Common myeloid progenitor, CD34-positive (primary cell): ENCODE measurements at regions of chr2 and their contacts with region 1.

Region 1: GRCh38 chr2:25606892-25607291 is 66.5 kb downstream of the DTNB start:
- DNase-seq: peak; percentile 42 to 72 (median 69)
- H3K4me3 ChIP-seq: no peak overlapping the region
- H3K27ac ChIP-seq: no peak overlapping the region
- H3K4me1 ChIP-seq: peaks cover 0 to 4% (median under 1%) of the 10 kb centered on the region in 4 experiments
- H3K27me3 ChIP-seq: no peaks in the 10 kb centered on the region

Region 2: GRCh38 chr2:24863641-24864040 is 743.3 kb before region 1 on chr2:
- CTCF ChIA-PET with region 1: no interaction called
- POLR2A ChIA-PET with region 1: no interaction called
- DNase-seq: no peak
- H3K4me3 ChIP-seq: no peak overlapping the region
- H3K27ac ChIP-seq: no peak overlapping the region
- H3K4me1 ChIP-seq: peaks cover 0 to 12% (median 2%) of the 10 kb centered on the region in 4 experiments
- H3K27me3 ChIP-seq: no peaks in the 10 kb centered on the region

Region 3: DNA sequence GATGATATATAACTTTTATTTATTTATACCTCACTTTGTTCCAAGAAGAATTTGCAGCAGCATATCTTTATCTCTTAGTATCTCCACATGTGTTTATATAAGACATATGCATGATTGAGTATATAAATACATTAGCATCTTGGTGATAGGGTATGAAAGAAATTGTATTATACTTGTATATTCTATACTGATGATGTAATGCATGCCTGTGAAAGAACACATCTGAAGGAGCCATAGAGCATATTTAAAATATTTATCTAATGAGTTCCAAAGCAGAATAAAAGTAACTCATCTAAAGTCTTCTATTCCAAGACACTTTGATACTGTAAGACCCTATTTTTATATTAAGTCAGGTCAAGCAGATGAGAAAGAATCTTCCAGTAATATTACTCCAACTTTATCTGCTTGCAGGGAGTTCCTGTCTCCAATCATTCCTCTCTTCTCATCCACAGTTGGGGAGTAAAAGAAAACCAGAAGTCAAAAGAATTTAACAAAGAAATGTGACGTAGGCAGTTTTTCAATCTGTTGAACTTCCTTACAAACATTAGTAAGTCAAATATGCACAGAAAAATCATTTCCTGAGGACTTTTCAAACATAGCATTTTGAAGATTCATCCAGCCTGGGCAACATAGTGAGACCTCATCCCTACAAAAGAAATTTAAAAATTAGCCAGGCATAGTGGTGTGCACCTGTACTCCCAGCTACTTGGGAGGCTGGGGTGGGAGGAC is 10.2 kb before region 1 on chr2:
- CTCF ChIA-PET with region 1: interaction called, 13 read pairs
- POLR2A ChIA-PET with region 1: no interaction called
- DNase-seq: peak in 1 of 3 donors; percentile 16
- H3K4me3 ChIP-seq: no peak overlapping the region
- H3K27ac ChIP-seq: no peak overlapping the region
- H3K4me1 ChIP-seq: peaks cover 0 to 16% (median 0%) of the 10 kb centered on the region in 4 experiments
- H3K27me3 ChIP-seq: no peaks in the 10 kb centered on the region

Region 4: DNA sequence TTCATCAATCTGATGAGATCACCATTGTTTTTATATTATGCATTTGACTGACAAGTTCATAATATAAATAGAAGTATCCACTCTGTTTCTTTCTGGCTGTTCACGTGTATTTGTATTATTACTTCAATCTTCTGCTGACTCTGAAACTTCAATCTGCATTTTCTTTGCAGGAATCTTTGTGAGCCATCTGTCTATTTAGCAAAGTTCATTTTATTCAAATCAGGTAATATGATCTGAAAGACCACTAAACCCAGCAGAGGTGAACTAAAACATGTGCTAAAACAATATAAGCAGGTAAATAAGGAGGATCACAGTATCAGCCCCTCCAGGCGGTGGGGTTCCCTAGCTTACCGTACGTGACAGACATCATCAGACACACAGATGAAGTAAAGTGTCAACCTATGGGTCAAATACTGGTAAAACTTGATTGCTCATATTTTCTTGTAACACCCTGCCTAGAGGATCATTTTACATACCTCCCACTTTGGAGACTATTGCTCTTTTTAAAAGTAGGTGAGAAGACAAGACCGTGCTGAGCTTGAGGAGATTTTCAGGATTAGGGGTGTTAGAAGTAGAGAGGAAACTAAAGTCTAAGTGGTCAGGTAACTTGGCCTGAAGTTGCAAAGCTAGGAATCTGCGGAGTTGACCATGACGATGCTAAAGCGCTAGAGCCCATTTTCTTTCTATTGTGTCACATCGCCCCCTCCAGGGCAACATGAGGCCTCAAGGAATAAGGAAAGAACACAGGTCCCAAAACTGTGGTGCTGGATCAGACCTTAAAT is 57.5 kb after region 1 on chr2:
- CTCF ChIA-PET with region 1: interaction called, 87 read pairs
- POLR2A ChIA-PET with region 1: no interaction called
- DNase-seq: peak; percentile 57 to 75 (median 73)
- H3K4me3 ChIP-seq: peak overlapping the region in 1 of 7 experiments; percentile 63
- H3K27ac ChIP-seq: no peak overlapping the region
- H3K4me1 ChIP-seq: peaks cover 0 to 5% (median 0%) of the 10 kb centered on the region in 4 experiments
- H3K27me3 ChIP-seq: no peaks in the 10 kb centered on the region

Region 5: GRCh38 chr2:25672500-25673299 is 65.8 kb after region 1 on chr2:
- CTCF ChIA-PET with region 1: interaction called, 87 read pairs
- POLR2A ChIA-PET with region 1: no interaction called
- DNase-seq: peak; percentile 64 to 90 (median 83)
- H3K4me3 ChIP-seq: peak overlapping the region; percentile 71 to 96 (median 80)
- H3K27ac ChIP-seq: peak overlapping the region in 1 of 2 experiments; percentile 53
- H3K4me1 ChIP-seq: peaks cover 6 to 25% (median 20%) of the 10 kb centered on the region in 4 experiments
- H3K27me3 ChIP-seq: no peaks in the 10 kb centered on the region

Region 6: GRCh38 chr2:25700221-25700660 is 93.3 kb after region 1 on chr2:
- CTCF ChIA-PET with region 1: interaction called, 62 read pairs
- POLR2A ChIA-PET with region 1: interaction called, 3 read pairs
- DNase-seq: peak; percentile 49 to 61 (median 59)
- H3K4me3 ChIP-seq: no peak overlapping the region
- H3K27ac ChIP-seq: no peak overlapping the region
- H3K4me1 ChIP-seq: peaks cover 0 to 11% (median 4%) of the 10 kb centered on the region in 4 experiments
- H3K27me3 ChIP-seq: no peaks in the 10 kb centered on the region